Cardiac septum (tissue), 1 donor: ENCODE measurements at regions of chr4 and their contacts with region 1.

Region 1: GRCh38 chr4:48578132-48578968 is 88.3 kb downstream of the ZAR1 start:
- DNase-seq: no peak

Region 2: GRCh38 chr4:48681856-48682255 is 103.5 kb after region 1 on chr4:
- intact Hi-C with region 1: loop called (anchors 5 kb)
- DNase-seq: no peak

Region 3: GRCh38 chr4:48830706-48831531 is 252.6 kb after region 1 on chr4 and contains the start of gene OCIAD1:
- intact Hi-C with region 1: loop called (anchors 10 kb)
- DNase-seq: peak; percentile 97
- total RNA-seq, gene OCIAD1: 137 TPM